Heart right ventricle (tissue), 16 donors: ENCODE measurements at regions of chr20 and their contacts with region 1.

Region 1: DNA sequence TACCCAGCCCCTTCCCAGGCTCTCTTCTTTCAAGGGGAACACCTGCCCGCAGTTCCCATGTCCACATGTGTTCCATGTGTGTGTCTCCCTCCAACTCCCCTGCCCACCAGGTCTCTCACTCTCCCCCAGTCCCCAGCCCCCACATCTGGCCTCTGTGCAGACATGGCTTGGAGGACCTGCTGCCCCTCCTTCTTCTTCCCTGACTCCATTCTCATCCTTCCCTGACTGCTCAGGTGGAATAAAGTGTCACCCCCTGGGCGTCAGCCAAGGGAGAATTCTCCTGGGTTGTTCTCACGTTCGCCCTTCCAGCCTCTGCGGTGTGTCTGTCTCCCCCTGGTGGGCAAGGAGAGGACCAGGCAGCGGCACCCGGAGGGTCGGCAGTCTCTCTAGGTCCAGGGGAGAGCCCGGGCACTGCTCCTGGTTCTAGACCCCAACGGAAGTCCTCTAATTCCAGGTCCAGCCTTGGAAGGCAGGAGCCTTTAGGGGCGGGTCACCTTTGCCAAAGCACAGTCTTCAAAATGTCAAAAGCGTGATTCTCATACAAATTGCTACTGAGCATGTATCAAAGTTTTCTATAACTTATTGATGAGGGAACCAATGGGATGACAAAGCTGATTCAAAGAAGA is 50.5 kb downstream of the EBF4 start:
- DNase-seq: peak; percentile 39 to 43
- ATAC-seq: peak in 6 of 8 donors; percentile 32 to 68 (median 56)
- H3K4me3 ChIP-seq: no peak overlapping the region
- H3K27ac ChIP-seq: no peak overlapping the region
- H3K4me1 ChIP-seq: peaks cover 0 to 4% (median 0%) of the 10 kb centered on the region in 9 donors
- H3K27me3 ChIP-seq: peaks cover 0 to 14% (median 6%) of the 10 kb centered on the region in 7 donors
- CTCF ChIP-seq: peak; percentile 49 to 92 (median 71)

Region 2: GRCh38 chr20:2688041-2688591 is 54.9 kb before region 1 on chr20:
- intact Hi-C with region 1: loop called in 3 of 10 experiments (anchors 1 to 5 kb)
- DNase-seq: peak; percentile 29 to 52
- ATAC-seq: peak in 3 of 8 donors; percentile 40 to 56 (median 46)
- H3K4me3 ChIP-seq: no peak overlapping the region
- H3K27ac ChIP-seq: no peak overlapping the region
- H3K4me1 ChIP-seq: peaks cover 0 to 18% (median 6%) of the 10 kb centered on the region in 9 donors
- H3K27me3 ChIP-seq: peaks cover 0 to 57% (median 10%) of the 10 kb centered on the region in 7 donors
- CTCF ChIP-seq: peak; percentile 25 to 74 (median 62)

Region 3: DNA sequence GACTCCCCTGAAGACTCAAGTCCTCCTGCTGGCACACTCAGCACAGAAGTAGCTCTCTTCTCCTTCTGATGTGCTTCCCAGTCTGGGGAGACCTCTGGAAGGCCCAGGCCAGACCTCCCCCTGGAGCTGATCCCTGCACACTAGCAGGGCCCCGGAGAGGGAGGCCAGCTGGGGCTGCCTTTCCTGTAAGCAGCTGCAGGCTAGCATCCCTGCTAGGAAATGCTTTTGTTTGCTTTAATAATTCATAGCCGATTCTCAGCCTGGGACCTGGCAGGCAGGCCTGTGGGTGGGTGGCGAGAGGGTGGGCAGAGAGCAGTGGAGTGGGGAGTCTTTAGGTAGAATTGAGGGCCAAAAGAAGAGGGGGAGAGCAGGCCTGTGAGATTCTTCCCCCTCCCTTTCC is 45.3 kb before region 1 on chr20:
- intact Hi-C with region 1: loop called in 2 of 10 experiments (anchors 5 kb)
- DNase-seq: no peak
- ATAC-seq: no peak
- H3K4me3 ChIP-seq: no peak overlapping the region
- H3K27ac ChIP-seq: no peak overlapping the region
- H3K4me1 ChIP-seq: peaks cover 0 to 12% (median 4%) of the 10 kb centered on the region in 9 donors
- H3K27me3 ChIP-seq: peaks cover 0 to 37% (median 14%) of the 10 kb centered on the region in 7 donors
- CTCF ChIP-seq: no peak